Activated CD8-positive, alpha-beta T cell treated with anti-CD3 and anti-CD28 coated beads, Interleukin-2, amount 10 ng/mL, durations not matched to agents 7 days and 5 days (primary cell): ENCODE measurements at regions of chr12 and their contacts with region 1.

Region 1: DNA sequence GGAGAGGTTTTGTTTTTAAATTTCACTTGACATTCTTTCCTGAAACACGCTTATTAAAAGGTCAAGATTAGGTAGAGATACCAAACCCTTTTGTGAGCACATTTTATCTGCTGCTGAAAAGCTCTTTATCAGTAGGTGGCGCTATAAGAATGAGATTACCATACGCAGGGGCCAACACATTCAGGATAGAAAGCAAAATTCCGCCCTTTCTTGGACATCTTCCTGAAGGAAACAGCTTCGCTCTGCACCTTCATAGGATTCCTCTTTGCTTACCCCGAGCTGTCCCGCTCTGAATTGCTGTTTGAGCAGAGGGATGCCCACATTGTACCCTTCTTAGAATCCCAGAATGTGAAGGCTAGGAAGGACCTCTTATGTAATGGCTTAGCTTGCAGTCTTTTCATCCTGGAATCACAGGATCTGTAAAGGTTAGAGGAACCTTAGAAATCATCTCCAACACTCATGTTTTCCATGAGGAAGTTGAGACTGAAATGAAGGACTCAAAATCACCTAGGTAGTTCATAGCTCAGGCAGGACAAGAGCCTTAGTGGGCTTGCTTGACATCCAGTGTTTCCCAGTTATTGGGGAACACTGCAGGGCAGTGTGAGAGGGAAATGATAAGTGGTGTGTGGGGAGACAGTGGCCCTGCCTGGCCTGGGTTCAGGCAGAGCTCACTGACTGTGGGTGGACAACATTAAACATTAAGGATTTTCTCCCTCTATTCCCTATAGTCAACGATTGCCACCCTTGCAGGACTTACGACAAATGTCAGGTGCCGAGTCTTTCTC is 38.7 kb upstream of the CRY1 start:
- DNase-seq: peak; percentile 33
- ATAC-seq: no peak
- H3K4me3 Mint-ChIP-seq: no peak overlapping the region
- H3K27ac Mint-ChIP-seq: no peak overlapping the region
- H3K4me1 Mint-ChIP-seq: peaks cover 6% of the 10 kb centered on the region
- H3K27me3 Mint-ChIP-seq: peaks cover 3% of the 10 kb centered on the region

Region 2: GRCh38 chr12:107057071-107057818 is 74.8 kb before region 1 on chr12:
- CTCF ChIA-PET with region 1: no interaction called
- POLR2A ChIA-PET with region 1: no interaction called
- DNase-seq: no peak
- ATAC-seq: no peak
- H3K4me3 Mint-ChIP-seq: no peak overlapping the region
- H3K27ac Mint-ChIP-seq: no peak overlapping the region
- H3K4me1 Mint-ChIP-seq: no peaks in the 10 kb centered on the region
- H3K27me3 Mint-ChIP-seq: no peaks in the 10 kb centered on the region

Region 3: GRCh38 chr12:107109741-107110719 is 22.0 kb before region 1 on chr12:
- CTCF ChIA-PET with region 1: interaction called, 41 read pairs
- POLR2A ChIA-PET with region 1: no interaction called
- DNase-seq: no peak
- ATAC-seq: no peak
- H3K4me3 Mint-ChIP-seq: no peak overlapping the region
- H3K27ac Mint-ChIP-seq: no peak overlapping the region
- H3K4me1 Mint-ChIP-seq: no peaks in the 10 kb centered on the region
- H3K27me3 Mint-ChIP-seq: peaks cover 33% of the 10 kb centered on the region

Region 4: GRCh38 chr12:107236824-107237511 is 104.9 kb after region 1 on chr12:
- CTCF ChIA-PET with region 1: interaction called, 12 read pairs
- POLR2A ChIA-PET with region 1: no interaction called
- DNase-seq: no peak
- ATAC-seq: no peak
- H3K4me3 Mint-ChIP-seq: no peak overlapping the region
- H3K27ac Mint-ChIP-seq: no peak overlapping the region
- H3K4me1 Mint-ChIP-seq: peaks cover 20% of the 10 kb centered on the region
- H3K27me3 Mint-ChIP-seq: peaks cover 6% of the 10 kb centered on the region

Region 5: GRCh38 chr12:107328442-107329133 is 196.6 kb after region 1 on chr12:
- CTCF ChIA-PET with region 1: interaction called, 14 read pairs
- POLR2A ChIA-PET with region 1: no interaction called
- DNase-seq: peak; percentile 48
- ATAC-seq: peak; percentile 40
- H3K4me3 Mint-ChIP-seq: no peak overlapping the region
- H3K27ac Mint-ChIP-seq: no peak overlapping the region
- H3K4me1 Mint-ChIP-seq: peaks cover 90% of the 10 kb centered on the region
- H3K27me3 Mint-ChIP-seq: no peaks in the 10 kb centered on the region

Region 6: GRCh38 chr12:107597695-107598410 is 465.8 kb after region 1 on chr12:
- CTCF ChIA-PET with region 1: interaction called, 12 read pairs
- POLR2A ChIA-PET with region 1: no interaction called
- DNase-seq: no peak
- ATAC-seq: no peak
- H3K4me3 Mint-ChIP-seq: no peak overlapping the region
- H3K27ac Mint-ChIP-seq: no peak overlapping the region
- H3K4me1 Mint-ChIP-seq: no peaks in the 10 kb centered on the region
- H3K27me3 Mint-ChIP-seq: no peaks in the 10 kb centered on the region